B cell (primary cell): ENCODE measurements at regions of chr11 and their contacts with region 1.

Region 1: GRCh38 chr11:62880803-62881578 is at the start of gene SLC3A2:
- DNase-seq: peak; percentile 93
- ATAC-seq: peak; percentile 77
- H3K4me3 ChIP-seq: peak within 1 kb of the TSS; percentile 66 to 93 (median 78)
- H3K4me3 Mint-ChIP-seq: peak within 1 kb of the TSS; percentile 100
- H3K27ac ChIP-seq: peak within 1 kb of the TSS; percentile 86 to 90
- H3K27ac Mint-ChIP-seq: peak within 1 kb of the TSS; percentile 100
- H3K4me1 ChIP-seq: peaks cover 25 to 36% of the 10 kb centered on the region in 2 donors
- H3K4me1 Mint-ChIP-seq: peaks cover 39% of the 10 kb centered on the region
- H3K27me3 ChIP-seq: no peaks in the 10 kb centered on the region
- H3K27me3 Mint-ChIP-seq: no peaks in the 10 kb centered on the region
- CTCF ChIP-seq: peak; percentile 87
- total RNA-seq, gene SLC3A2: 148 and 175 TPM in 2 replicates

Region 2: DNA sequence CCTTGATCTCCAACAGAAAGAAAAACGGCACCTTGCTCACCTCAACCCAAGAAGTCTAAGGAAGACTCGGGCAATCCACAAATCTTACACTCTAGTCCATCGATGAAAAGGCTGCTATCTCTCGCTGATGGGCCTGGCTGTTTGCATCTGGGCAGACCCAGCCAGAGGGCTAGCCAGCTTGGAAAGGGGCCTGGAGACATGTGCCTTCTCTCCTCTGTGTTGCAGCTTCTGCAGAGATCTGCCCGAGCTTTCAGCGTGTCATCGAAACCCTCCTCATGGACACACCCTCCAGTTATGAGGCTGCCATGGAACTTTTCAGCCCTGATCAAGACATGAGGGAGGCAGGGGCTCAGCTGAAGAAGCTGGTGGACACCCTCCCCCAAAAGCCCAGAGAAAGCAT is 459.0 kb before region 1 on chr11:
- CTCF ChIA-PET with region 1: interaction called, 6 read pairs
- POLR2A ChIA-PET with region 1: interaction called, 3 read pairs
- intact Hi-C with region 1: loop called (anchors 5 kb)
- DNase-seq: no peak
- ATAC-seq: no peak
- H3K4me3 ChIP-seq: no peak overlapping the region
- H3K4me3 Mint-ChIP-seq: no peak overlapping the region
- H3K27ac ChIP-seq: no peak overlapping the region
- H3K27ac Mint-ChIP-seq: no peak overlapping the region
- H3K4me1 ChIP-seq: peaks cover 4 to 7% of the 10 kb centered on the region in 2 donors
- H3K4me1 Mint-ChIP-seq: peaks cover 3% of the 10 kb centered on the region
- H3K27me3 ChIP-seq: peaks cover 0 to 2% (median 0%) of the 10 kb centered on the region in 4 experiments
- H3K27me3 Mint-ChIP-seq: peaks cover 11% of the 10 kb centered on the region
- CTCF ChIP-seq: no peak

Region 3: GRCh38 chr11:62726915-62727763 is 153.9 kb before region 1 on chr11 and contains the start of gene HNRNPUL2:
- CTCF ChIA-PET with region 1: interaction called, 6 read pairs
- POLR2A ChIA-PET with region 1: interaction called, 14 read pairs
- intact Hi-C with region 1: loop called (anchors 2 kb)
- DNase-seq: peak; percentile 99
- ATAC-seq: peak; percentile 79
- H3K4me3 ChIP-seq: peak within 1 kb of the TSS; percentile 96 to 100 (median 99)
- H3K4me3 Mint-ChIP-seq: peak within 1 kb of the TSS; percentile 95
- H3K27ac ChIP-seq: peak within 1 kb of the TSS; percentile 90 to 91
- H3K27ac Mint-ChIP-seq: peak within 1 kb of the TSS; percentile 99
- H3K4me1 ChIP-seq: peaks cover 37 to 41% of the 10 kb centered on the region in 2 donors
- H3K4me1 Mint-ChIP-seq: peaks cover 53% of the 10 kb centered on the region
- H3K27me3 ChIP-seq: no peaks in the 10 kb centered on the region
- H3K27me3 Mint-ChIP-seq: no peaks in the 10 kb centered on the region
- CTCF ChIP-seq: no peak
- total RNA-seq, gene HNRNPUL2: 70.4 and 78.2 TPM in 2 replicates

Region 4: DNA sequence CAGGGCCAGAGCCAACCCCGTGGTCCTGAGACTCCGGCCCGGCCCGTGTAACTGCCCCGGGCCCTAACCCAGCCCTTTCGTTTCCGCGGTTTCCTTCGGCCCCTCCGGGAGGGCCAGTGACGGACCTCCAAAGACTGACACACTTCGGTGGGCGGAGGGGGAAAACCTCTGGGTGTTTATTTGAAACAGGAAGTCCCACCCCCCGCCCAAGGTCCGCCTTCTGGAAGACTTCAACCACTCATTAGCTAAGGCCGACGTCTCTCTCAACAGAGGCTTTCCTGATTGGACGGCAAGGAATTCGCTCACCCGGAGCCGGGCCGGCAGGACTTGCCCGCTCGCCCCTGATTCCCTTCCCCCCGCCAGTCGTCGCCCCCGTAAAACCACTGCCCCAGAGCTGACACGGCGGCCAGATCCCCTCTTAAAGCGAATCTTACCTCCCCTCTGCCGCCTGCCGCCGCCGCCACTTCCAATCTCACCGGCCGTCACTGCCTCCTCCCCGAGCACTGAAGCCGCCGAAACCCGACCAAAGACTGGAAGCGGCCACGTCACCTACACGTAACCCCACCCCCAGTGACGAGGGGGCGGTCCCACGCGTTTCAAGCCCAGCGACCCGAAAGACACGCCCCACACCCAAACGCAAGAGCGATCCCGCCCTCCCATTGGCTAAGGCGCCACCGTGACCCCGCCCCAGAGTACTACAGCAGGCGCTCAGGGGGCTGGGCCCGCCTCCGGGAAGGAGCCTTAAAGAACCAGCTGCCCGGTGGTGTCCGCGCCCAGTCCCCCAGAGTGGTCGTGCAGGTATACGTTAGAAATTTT is 49.3 kb before region 1 on chr11 and contains the start of gene STX5:
- CTCF ChIA-PET with region 1: no interaction called
- POLR2A ChIA-PET with region 1: interaction called, 15 read pairs
- intact Hi-C with region 1: no loop called
- DNase-seq: peak; percentile 100
- ATAC-seq: peak; percentile 95
- H3K4me3 ChIP-seq: peak within 1 kb of the TSS; percentile 69 to 96 (median 92)
- H3K4me3 Mint-ChIP-seq: peak within 1 kb of the TSS; percentile 92
- H3K27ac ChIP-seq: peak within 1 kb of the TSS; percentile 96 to 99
- H3K27ac Mint-ChIP-seq: peak within 1 kb of the TSS; percentile 97
- H3K4me1 ChIP-seq: peaks cover 16 to 30% of the 10 kb centered on the region in 2 donors
- H3K4me1 Mint-ChIP-seq: peaks cover 43% of the 10 kb centered on the region
- H3K27me3 ChIP-seq: no peaks in the 10 kb centered on the region
- H3K27me3 Mint-ChIP-seq: no peaks in the 10 kb centered on the region
- CTCF ChIP-seq: no peak
- total RNA-seq, gene STX5: 98.1 and 99.1 TPM in 2 replicates

Region 5: DNA sequence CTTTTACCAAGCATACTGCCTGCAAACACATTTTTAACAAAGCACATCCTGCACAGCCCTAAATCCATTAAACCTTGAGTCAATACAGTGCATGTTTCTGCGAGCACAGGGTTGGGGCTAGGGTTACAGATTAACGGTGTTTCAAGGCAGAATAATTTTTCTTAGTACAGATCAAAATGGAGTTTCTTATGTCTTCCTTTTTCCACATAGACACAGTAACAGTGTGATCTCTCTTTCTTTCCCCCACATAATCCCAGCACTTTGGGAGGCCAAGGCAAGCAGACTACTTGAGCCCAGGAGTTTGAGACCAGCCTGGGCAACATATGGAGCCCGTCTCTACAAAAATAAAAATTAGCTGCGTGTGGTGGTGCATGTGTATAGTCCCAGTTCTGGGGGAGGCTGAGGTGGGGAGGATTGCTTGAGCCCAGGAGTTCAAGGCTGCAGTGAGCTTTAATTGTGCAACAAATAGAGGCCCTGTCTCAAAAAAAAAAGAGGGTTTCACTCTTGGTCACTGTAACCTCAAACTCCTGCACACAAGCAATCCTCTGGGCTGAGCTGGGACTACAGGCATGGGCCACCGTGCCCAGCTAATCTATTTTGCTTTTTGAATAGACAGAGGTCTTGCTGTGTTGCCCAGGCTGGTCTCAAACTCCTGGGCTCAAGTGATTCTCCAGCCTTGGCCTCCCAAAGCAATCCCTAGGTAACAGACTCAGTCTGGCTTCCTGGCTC is 20.0 kb before region 1 on chr11:
- CTCF ChIA-PET with region 1: interaction called, 24 read pairs
- POLR2A ChIA-PET with region 1: interaction called, 20 read pairs
- intact Hi-C with region 1: loop called (anchors 1 kb)
- DNase-seq: no peak
- ATAC-seq: no peak
- H3K4me3 ChIP-seq: no peak overlapping the region
- H3K4me3 Mint-ChIP-seq: no peak overlapping the region
- H3K27ac ChIP-seq: no peak overlapping the region
- H3K27ac Mint-ChIP-seq: no peak overlapping the region
- H3K4me1 ChIP-seq: peaks cover 4 to 24% of the 10 kb centered on the region in 2 donors
- H3K4me1 Mint-ChIP-seq: peaks cover 19% of the 10 kb centered on the region
- H3K27me3 ChIP-seq: no peaks in the 10 kb centered on the region
- H3K27me3 Mint-ChIP-seq: no peaks in the 10 kb centered on the region
- CTCF ChIP-seq: no peak